ENCODE measurements at regions of chr1 and their contacts with region 1.

Region 1: DNA sequence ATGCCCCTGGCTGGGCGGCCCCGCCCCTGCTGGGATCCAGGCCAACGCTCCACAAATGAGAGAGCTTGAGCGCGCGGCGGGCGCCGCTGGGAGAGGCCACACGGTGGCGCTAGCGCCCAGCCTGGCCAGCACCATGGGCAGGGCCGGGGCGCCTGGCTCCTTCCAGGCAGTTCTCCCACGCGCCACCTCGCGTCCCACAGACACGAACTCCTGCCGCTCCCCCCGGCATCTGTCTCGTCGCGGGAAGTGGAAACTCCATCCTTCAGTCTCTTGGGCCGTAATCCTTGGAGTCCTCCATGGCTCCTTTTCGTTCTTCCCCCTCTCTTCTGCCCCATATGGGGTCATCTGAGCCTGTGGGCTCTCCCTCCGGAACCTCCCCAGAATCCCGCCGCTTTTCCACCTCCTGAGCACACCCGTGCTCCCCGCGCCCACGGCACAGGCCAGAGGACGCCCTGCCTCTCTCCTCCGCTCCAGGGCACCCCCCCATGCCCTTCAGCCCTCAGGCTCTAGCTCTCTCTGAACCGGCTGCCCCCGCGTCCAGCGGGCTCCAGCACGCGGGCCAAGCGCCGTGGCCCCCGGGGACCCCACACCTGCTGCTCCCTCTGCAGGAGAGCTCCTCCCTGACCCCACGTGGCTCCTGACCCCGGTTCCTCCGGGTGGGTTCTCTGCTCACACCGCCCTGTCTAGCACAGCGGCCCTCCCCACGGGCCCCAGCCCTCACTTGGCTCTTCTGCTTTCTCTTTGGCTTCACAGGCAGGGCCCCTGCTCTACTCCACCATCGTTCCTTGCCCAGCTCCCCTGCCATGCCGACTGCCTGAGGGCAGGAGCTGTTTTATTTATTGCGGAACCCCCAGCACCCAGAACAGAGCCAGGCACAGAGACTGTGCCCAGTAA is 31.9 kb upstream of the EDN2 start:
- DNase-seq: peak; percentile 54
- H3K4me3 ChIP-seq: no peak overlapping the region
- H3K27ac ChIP-seq: no peak overlapping the region
- H3K4me1 ChIP-seq: no peaks in the 10 kb centered on the region
- CTCF ChIP-seq: peak; percentile 86

Region 2: GRCh38 chr1:41868599-41868998 is 352.2 kb after region 1 on chr1:
- CTCF ChIA-PET with region 1: no interaction called
- POLR2A ChIA-PET with region 1: no interaction called
- intact Hi-C with region 1: loop called (anchors 10 kb)
- DNase-seq: peak; percentile 34
- H3K4me3 ChIP-seq: no peak overlapping the region
- H3K27ac ChIP-seq: no peak overlapping the region
- H3K4me1 ChIP-seq: no peaks in the 10 kb centered on the region
- CTCF ChIP-seq: peak; percentile 64

Measured in OCI-LY7 (cell line).